ENCODE measurements at regions of chr1 and their contacts with region 1.

Region 1: GRCh38 chr1:109532365-109533136 is 7.1 kb upstream of the GPR61 start:
- DNase-seq: peak; percentile 98
- H3K4me3 Mint-ChIP-seq: peak overlapping the region; percentile 74
- H3K27ac Mint-ChIP-seq: peak overlapping the region; percentile 86
- H3K4me1 Mint-ChIP-seq: peaks cover 23% of the 10 kb centered on the region
- H3K27me3 Mint-ChIP-seq: no peaks in the 10 kb centered on the region

Region 2: DNA sequence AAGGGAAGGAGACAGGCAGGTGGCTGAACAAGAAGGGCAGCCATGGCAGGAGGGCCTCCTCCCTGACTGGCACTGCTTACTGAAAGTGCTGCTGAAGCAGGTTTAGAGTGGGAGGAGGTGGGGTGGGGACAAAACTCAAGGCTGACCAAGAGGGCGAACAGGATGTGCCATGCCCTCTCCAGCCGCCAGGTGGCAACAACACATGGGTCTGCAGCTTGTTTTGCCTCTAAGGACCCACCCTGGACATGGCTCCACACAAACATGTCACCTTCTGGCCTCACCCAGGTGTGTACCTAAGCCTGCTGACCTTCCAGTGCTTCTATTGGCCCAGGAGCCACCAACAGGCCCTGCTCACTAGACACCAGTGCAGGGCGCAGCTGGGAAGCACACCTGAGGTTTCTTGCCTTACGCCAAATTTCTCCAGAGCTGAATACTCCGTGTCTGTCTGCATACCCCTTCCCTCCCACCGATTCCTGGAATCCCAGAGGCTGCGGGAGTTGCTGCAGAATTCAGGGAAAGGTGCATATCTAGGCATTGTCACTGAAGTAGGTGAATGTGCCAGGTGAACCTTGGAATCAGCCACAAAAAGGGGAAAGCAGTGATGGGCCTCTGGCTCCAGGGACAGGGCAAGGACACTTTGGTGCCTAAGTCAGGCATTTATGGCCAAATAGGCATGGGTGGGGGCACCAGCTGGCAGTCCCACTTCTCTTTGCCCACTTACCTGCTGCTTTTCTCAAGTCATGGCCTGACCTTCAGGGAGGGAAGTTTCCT is 254.9 kb before region 1 on chr1:
- intact Hi-C with region 1: loop called (anchors 1 kb)
- DNase-seq: peak; percentile 91
- H3K4me3 Mint-ChIP-seq: no peak overlapping the region
- H3K27ac Mint-ChIP-seq: no peak overlapping the region
- H3K4me1 Mint-ChIP-seq: peaks cover 17% of the 10 kb centered on the region
- H3K27me3 Mint-ChIP-seq: no peaks in the 10 kb centered on the region

Region 3: GRCh38 chr1:109404838-109405237 is 127.7 kb before region 1 on chr1:
- intact Hi-C with region 1: loop called (anchors 5 kb)
- DNase-seq: peak; percentile 72
- H3K4me3 Mint-ChIP-seq: peak overlapping the region; percentile 3
- H3K27ac Mint-ChIP-seq: peak overlapping the region; percentile 71
- H3K4me1 Mint-ChIP-seq: peaks cover 20% of the 10 kb centered on the region
- H3K27me3 Mint-ChIP-seq: no peaks in the 10 kb centered on the region

Region 4: GRCh38 chr1:109446085-109446695 is 86.4 kb before region 1 on chr1:
- intact Hi-C with region 1: no loop called
- DNase-seq: no peak
- H3K4me3 Mint-ChIP-seq: no peak overlapping the region
- H3K27ac Mint-ChIP-seq: no peak overlapping the region
- H3K4me1 Mint-ChIP-seq: peaks cover 2% of the 10 kb centered on the region
- H3K27me3 Mint-ChIP-seq: peaks cover 35% of the 10 kb centered on the region

Region 5: GRCh38 chr1:109493805-109494539 is 38.6 kb before region 1 on chr1 and contains the start of gene CYB561D1:
- intact Hi-C with region 1: loop called (anchors 1 kb)
- DNase-seq: peak; percentile 97
- H3K4me3 Mint-ChIP-seq: peak within 1 kb of the TSS; percentile 93
- H3K27ac Mint-ChIP-seq: peak within 1 kb of the TSS; percentile 70
- H3K4me1 Mint-ChIP-seq: peaks cover 36% of the 10 kb centered on the region
- H3K27me3 Mint-ChIP-seq: no peaks in the 10 kb centered on the region
- total RNA-seq, gene CYB561D1: 11.3 and 13.1 TPM in 2 replicates